Activated CD4-positive, alpha-beta T cell treated with anti-CD3 and anti-CD28 coated beads for 36 hours (primary cell): ENCODE measurements at regions of chr4 and their contacts with region 1.

Region 1: DNA sequence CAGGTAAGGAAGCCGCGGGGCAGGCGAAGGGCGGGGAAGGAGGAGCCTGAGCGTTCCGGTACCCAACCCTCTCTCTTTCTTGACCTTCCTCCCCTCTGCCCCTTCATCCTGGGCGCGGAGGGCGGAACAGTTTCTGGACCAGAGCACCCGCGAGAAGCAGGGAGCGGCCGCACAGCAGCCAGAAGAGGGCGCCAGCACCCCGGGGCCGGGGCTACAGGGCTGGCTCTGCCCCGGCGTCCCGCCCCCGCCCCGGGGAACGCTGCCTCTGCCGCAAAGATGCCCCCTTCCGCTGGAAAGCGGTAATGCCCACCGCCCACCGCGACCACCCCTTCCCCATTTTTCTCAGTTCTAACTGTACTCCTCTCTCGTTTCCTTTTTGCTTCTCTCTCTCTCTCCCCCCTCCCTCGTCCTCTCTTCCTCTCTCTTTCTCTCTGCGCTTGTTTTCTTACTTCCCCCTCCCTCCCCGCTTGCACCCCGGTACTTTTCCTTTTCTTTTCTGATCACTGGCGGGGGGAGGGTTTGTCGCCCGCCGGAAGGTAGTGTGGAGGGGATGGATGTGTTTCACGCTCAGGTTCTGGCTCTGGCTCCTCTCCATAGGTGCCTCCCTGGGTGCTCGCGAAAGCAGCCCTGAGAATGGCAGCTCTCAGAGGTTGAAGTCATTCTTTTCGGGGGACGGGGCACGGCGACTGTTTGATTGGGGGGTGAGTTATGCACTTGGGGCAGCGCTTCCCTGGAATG is 13.1 kb upstream of the PRDM8 start:
- DNase-seq: peak; percentile 96
- ATAC-seq: peak; percentile 82
- H3K4me3 Mint-ChIP-seq: peak overlapping the region; percentile 82
- H3K27ac Mint-ChIP-seq: peak overlapping the region; percentile 90
- H3K4me1 Mint-ChIP-seq: peaks cover 45% of the 10 kb centered on the region
- H3K27me3 Mint-ChIP-seq: peaks cover 19% of the 10 kb centered on the region

Region 2: DNA sequence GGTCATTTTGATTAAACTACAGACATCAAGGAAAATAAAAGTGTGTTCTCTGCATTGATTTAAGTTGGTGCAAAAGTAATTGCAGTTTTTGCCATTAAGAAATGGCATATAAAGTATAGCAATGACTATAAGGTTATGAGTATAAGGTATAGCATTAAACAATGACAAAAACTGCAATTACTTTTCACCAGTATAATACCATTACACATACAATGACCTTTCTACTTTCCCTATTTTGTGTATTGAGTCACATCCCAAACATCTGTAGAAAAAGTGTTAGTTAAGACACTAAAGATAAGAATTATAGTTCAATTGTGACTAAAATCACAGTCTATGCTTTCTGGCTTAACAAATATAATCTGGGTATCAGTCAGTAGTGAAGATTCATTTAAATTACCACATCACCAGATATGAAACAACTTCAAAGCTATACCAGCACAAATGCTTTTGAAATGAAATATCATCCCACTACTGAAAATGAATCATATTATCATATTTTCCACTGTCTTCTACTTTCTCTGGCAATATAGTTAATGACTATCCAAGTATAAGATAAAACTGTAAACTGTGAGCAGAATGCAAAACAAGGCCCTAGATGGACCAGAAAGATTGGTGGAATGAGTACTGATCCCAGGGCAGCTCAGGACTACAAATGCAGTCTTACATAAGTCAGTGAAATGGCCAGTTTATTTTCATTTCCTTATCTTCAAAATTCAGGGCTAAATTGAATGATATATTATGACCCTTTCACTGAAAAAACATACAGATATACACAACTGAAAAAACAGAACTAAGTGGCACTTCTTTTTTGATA is 352.3 kb before region 1 on chr4:
- CTCF ChIA-PET with region 1: no interaction called
- POLR2A ChIA-PET with region 1: no interaction called
- intact Hi-C with region 1: loop called in 1 of 2 experiments (anchors 5 kb)
- DNase-seq: no peak
- ATAC-seq: peak; percentile 89
- H3K4me3 Mint-ChIP-seq: no peak overlapping the region
- H3K27ac Mint-ChIP-seq: peak overlapping the region; percentile 3
- H3K4me1 Mint-ChIP-seq: peaks cover 10% of the 10 kb centered on the region
- H3K27me3 Mint-ChIP-seq: peaks cover 17% of the 10 kb centered on the region

Region 3: DNA sequence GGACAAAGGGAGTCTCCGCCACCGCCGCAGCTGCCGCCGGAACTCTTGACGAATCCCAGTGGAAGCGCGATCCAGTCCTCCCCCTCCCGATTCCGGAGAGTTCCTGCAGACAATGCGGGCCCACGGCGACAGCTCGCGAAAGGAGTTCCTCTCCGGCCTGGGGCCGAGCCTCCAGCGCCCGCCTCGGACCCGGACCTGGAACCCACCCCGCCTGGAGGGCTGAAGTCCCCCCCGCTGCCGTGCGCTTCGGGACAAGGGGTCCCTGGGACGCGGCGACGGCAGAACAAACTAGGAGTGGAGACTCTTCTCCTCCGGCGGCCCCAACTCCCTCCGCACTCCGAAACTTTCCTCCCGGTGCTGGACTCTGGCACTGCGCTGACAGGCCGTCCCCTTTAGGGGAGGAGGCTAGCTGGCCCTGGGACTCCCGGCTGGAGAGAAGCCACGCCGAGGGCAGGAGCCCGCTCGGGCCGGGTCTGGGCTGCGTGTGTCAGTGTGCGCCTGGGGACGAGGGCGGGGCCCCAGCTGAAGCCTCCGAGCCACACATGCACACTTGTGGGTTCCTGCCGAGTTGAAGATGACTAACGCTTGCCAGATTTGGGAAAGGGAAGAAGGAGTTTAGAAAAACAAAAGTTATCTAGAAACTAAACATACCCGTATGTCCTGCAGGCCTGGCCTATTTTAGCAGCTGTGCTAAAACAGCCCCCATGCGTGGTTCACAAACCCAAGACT is 111.3 kb before region 1 on chr4 and contains the start of gene ANTXR2:
- CTCF ChIA-PET with region 1: interaction called, 18 read pairs
- POLR2A ChIA-PET with region 1: interaction called, 4 read pairs
- intact Hi-C with region 1: loop called (anchors 1 kb)
- DNase-seq: peak; percentile 79
- ATAC-seq: peak; percentile 64
- H3K4me3 Mint-ChIP-seq: peak within 1 kb of the TSS; percentile 80
- H3K27ac Mint-ChIP-seq: peak within 1 kb of the TSS; percentile 82
- H3K4me1 Mint-ChIP-seq: peaks cover 87% of the 10 kb centered on the region
- H3K27me3 Mint-ChIP-seq: peaks cover 4% of the 10 kb centered on the region
- total RNA-seq, gene ANTXR2: 2.3 to 3.8 TPM

Region 4: GRCh38 chr4:80153874-80154544 is 30.2 kb before region 1 on chr4:
- CTCF ChIA-PET with region 1: interaction called, 8 read pairs
- POLR2A ChIA-PET with region 1: no interaction called
- intact Hi-C with region 1: loop called in 1 of 2 experiments (anchors 1 kb)
- DNase-seq: no peak
- ATAC-seq: peak; percentile 89
- H3K4me3 Mint-ChIP-seq: no peak overlapping the region
- H3K27ac Mint-ChIP-seq: peak overlapping the region; percentile 67
- H3K4me1 Mint-ChIP-seq: peaks cover 28% of the 10 kb centered on the region
- H3K27me3 Mint-ChIP-seq: no peaks in the 10 kb centered on the region

Region 5: DNA sequence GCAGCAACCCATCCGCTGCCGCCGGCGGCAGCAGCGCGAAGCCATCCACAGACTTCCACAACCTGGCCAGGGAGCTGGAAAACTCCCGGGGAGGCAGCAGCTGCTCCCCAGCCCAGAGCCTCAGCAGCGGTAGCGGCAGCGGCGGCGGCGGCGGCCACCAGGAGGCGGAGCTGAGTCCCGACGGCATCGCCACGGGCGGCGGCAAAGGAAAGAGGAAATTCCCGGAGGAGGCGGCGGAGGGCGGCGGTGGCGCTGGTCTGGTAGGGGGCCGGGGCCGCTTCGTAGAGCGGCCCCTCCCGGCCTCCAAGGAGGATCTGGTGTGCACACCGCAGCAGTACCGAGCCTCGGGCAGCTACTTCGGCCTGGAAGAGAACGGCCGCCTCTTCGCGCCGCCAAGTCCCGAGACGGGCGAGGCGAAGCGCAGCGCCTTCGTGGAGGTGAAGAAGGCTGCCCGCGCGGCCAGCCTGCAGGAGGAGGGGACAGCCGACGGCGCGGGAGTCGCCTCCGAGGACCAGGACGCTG is 18.0 kb after region 1 on chr4:
- CTCF ChIA-PET with region 1: interaction called, 105 read pairs
- POLR2A ChIA-PET with region 1: interaction called, 3 read pairs
- intact Hi-C with region 1: loop called (anchors 1 to 2 kb)
- DNase-seq: peak; percentile 88
- ATAC-seq: peak; percentile 66
- H3K4me3 Mint-ChIP-seq: peak overlapping the region; percentile 68
- H3K27ac Mint-ChIP-seq: peak overlapping the region; percentile 64
- H3K4me1 Mint-ChIP-seq: peaks cover 30% of the 10 kb centered on the region
- H3K27me3 Mint-ChIP-seq: peaks cover 17% of the 10 kb centered on the region